Heart right ventricle (tissue), 16 donors: ENCODE measurements at regions of chr11 and their contacts with region 1.

Region 1: DNA sequence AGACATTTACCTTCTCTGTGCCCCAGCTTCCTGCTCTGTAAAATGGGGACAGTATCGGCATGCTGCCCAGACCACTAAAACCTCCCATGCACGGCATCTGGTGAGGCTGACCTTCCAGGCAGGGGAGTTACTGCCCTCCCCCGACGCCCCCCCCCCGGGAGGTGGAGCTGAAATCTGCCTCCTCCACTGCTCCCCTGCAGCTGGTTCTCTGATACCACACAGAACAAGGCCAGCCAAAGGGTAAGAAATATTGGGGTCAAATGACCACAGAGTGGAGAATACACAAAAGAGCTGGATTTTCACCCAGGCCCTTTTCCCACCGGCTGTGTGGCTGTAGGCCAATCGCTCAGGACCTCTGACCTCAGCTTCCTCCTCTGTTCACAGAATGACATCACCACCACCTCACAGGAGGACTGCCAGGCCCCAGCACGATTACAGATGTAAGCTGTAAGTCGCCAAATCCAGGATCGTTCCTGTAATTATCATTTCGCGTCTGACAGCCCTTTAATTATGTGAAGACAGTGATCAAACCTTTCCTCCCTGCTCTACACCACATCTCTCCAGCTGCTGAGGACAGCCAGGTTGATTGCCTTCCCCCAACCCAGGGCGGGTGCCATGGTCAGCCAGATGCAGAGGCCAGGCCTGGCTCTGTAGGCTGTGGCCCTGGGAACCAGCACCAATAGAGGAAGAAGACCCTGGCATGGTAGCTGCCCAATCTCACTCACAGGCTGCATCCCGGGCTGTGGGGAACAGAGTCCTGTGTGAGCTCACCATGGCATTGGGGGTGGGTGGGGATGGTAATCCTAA is 35.7 kb upstream of the KLHL35 start:
- DNase-seq: peak; percentile 71 to 83
- ATAC-seq: peak in 7 of 8 donors; percentile 64 to 87 (median 80)
- H3K4me3 ChIP-seq: no peak overlapping the region
- H3K27ac ChIP-seq: peak overlapping the region in 6 of 10 donors; percentile 21 to 58 (median 54)
- H3K4me1 ChIP-seq: peaks cover 0 to 40% (median 35%) of the 10 kb centered on the region in 9 donors
- H3K27me3 ChIP-seq: no peaks in the 10 kb centered on the region
- CTCF ChIP-seq: no peak

Region 2: DNA sequence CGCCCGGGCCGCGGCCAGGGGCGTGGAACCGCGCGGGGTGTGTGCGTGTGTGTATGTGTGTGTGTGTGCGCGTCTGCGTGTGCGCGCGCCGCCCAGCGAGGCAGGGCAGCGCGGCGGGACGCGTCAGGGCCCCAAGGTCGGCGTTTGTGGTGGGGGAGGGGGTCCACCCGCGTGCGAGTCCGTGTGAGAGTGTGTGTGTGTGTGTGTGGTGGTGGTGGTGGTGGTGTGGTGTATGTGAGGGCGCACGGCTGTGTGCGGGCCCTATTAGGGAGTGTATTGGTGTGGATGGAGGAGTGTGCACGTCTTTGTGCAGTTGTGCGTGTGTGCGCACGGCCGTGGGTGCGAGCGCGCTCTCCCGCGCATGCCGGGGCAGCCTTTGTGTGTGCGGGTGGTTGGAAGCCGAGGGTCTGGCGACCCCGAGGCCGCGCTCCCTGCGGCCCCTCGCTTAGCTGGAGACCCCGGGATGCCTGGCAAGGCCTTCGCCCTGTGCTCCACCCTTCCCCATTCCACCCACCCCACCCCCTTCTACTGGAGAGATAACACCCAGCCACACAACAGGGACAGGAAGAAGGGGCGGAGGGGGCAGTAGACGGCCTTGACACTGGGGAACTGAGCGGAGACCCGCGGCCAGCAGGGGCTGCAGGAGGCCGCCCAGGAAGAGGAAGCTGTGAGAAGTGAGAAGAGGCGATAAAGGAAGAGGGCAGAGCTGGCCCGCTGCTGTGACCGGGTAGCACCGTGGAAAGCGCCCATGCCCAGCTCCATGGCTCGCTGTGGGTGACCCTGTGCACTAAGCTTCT is 116.7 kb before region 1 on chr11:
- intact Hi-C with region 1: no loop called
- DNase-seq: peak; percentile 76 to 83
- ATAC-seq: peak; percentile 38 to 80 (median 55)
- H3K4me3 ChIP-seq: peak overlapping the region; percentile 38 to 91 (median 81)
- H3K27ac ChIP-seq: peak overlapping the region; percentile 57 to 95 (median 92)
- H3K4me1 ChIP-seq: peaks cover 22 to 59% (median 47%) of the 10 kb centered on the region in 9 donors
- H3K27me3 ChIP-seq: no peaks in the 10 kb centered on the region
- CTCF ChIP-seq: peak in 3 of 9 donors; percentile 16 to 34 (median 28)

Region 3: DNA sequence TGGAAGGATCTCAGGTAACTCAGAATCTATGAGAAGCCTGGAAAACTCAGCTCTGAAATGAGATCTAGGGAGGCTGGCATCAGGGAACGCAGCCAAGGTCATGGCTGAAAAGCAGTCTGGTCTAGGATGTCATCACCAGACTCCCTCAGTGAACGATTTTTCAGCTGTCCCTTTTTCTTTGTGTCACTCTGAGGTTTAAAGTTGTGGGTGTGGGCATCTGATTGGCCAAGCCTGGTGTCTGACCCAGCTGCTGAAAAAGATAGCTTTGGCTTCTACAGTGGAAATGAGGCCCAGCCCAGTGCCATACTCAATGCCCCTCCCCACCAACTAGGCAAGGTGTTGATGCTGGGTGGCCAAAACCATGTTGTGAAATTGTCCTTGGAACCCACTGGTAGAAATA is 54.9 kb before region 1 on chr11:
- intact Hi-C with region 1: loop called in 1 of 10 experiments (anchors 10 kb)
- DNase-seq: no peak
- ATAC-seq: no peak
- H3K4me3 ChIP-seq: no peak overlapping the region
- H3K27ac ChIP-seq: no peak overlapping the region
- H3K4me1 ChIP-seq: peaks cover 0 to 11% (median 4%) of the 10 kb centered on the region in 9 donors
- H3K27me3 ChIP-seq: no peaks in the 10 kb centered on the region
- CTCF ChIP-seq: no peak

Region 4: GRCh38 chr11:75450826-75451821 is 17.6 kb before region 1 on chr11:
- intact Hi-C with region 1: no loop called
- DNase-seq: no peak
- ATAC-seq: peak in 1 of 8 donors; percentile 10
- H3K4me3 ChIP-seq: no peak overlapping the region
- H3K27ac ChIP-seq: no peak overlapping the region
- H3K4me1 ChIP-seq: no peaks in the 10 kb centered on the region
- H3K27me3 ChIP-seq: peaks cover 0 to 6% (median 0%) of the 10 kb centered on the region in 7 donors
- CTCF ChIP-seq: peak in 8 of 9 donors; percentile 12 to 58 (median 42)

Region 5: GRCh38 chr11:75554258-75555022 is 85.7 kb after region 1 on chr11:
- intact Hi-C with region 1: no loop called
- DNase-seq: peak; percentile 93 to 94
- ATAC-seq: peak; percentile 87 to 95 (median 93)
- H3K4me3 ChIP-seq: peak overlapping the region in 7 of 10 donors; percentile 8 to 42 (median 34)
- H3K27ac ChIP-seq: peak overlapping the region; percentile 52 to 98 (median 92)
- H3K4me1 ChIP-seq: peaks cover 13 to 58% (median 47%) of the 10 kb centered on the region in 9 donors
- H3K27me3 ChIP-seq: no peaks in the 10 kb centered on the region
- CTCF ChIP-seq: no peak

Region 6: GRCh38 chr11:76096552-76096951 is 627.8 kb after region 1 on chr11:
- intact Hi-C with region 1: no loop called
- DNase-seq: no peak
- ATAC-seq: no peak
- H3K4me3 ChIP-seq: no peak overlapping the region
- H3K27ac ChIP-seq: no peak overlapping the region
- H3K4me1 ChIP-seq: peaks cover 0 to 16% (median 11%) of the 10 kb centered on the region in 9 donors
- H3K27me3 ChIP-seq: no peaks in the 10 kb centered on the region
- CTCF ChIP-seq: no peak